Activated naive CD4-positive, alpha-beta T cell treated with anti-CD3 and anti-CD28 coated beads for 36 hours (primary cell): ENCODE measurements at regions of chr6 and their contacts with region 1.

Region 1: DNA sequence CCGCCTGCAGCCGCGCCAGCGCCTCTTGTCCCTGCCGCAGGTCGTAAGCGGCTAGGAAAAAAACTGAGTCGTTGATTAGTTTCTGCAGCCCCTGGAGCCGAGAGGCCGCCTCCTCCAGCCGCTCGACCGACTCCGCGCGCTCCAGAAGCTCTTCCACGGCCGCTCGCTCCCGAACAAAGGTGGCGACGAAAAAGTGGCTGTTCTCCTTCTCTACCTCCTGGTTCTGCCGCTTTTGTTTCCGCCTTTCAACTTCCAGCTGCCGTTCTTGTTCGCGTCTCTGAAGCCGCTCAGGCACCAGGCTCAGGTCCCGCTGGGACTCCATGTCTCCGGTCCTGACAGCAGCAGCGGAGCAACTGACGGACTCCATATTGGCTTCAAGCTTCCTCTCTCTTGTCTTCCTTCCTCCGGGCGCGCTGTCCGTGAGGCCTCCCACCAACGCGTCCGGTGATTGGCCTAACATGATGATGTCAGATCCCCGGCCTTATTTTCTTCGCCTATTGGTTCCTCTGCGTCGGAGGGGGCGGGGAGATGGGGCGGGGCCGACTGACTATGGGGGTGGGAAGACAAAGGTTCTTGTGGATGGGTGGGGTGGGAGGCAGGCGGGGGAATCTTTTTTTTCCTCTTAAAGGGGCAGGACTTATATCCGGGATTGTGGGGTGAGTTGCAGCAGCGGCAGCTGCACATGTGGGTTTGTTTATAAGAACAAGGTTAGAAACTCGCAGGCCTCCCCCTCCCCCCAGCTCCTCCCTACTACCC is at the start of gene TBCC:
- DNase-seq: peak; percentile 98
- H3K4me3 Mint-ChIP-seq: peak within 1 kb of the TSS; percentile 100
- H3K27ac Mint-ChIP-seq: peak within 1 kb of the TSS; percentile 99
- H3K4me1 Mint-ChIP-seq: peaks cover 25% of the 10 kb centered on the region
- H3K27me3 Mint-ChIP-seq: no peaks in the 10 kb centered on the region
- total RNA-seq, gene TBCC: 12.6 to 12.9 TPM

Region 2: DNA sequence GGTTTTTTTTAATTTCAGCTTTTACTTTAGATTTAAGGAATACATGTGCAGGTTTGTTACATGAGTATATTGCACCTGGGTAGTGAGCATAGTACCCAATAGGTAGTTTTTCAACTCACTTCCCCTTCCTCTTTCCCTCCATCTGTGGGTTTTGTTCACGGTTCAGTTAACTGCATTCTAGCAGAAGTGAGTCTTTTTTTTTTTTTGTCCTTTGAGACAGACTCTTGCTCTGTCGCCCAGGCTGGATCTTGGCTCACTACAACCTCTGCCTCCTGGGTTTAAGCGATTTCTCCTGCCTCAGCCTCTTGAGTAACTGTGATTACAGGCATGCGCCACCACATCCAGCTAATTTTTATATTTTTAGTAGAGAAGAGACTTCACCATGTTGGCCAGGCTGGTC is 173.4 kb before region 1 on chr6:
- CTCF ChIA-PET with region 1: no interaction called
- intact Hi-C with region 1: loop called (anchors 1 kb)
- DNase-seq: no peak
- H3K4me3 Mint-ChIP-seq: no peak overlapping the region
- H3K27ac Mint-ChIP-seq: no peak overlapping the region
- H3K4me1 Mint-ChIP-seq: peaks cover 49% of the 10 kb centered on the region
- H3K27me3 Mint-ChIP-seq: no peaks in the 10 kb centered on the region

Region 3: DNA sequence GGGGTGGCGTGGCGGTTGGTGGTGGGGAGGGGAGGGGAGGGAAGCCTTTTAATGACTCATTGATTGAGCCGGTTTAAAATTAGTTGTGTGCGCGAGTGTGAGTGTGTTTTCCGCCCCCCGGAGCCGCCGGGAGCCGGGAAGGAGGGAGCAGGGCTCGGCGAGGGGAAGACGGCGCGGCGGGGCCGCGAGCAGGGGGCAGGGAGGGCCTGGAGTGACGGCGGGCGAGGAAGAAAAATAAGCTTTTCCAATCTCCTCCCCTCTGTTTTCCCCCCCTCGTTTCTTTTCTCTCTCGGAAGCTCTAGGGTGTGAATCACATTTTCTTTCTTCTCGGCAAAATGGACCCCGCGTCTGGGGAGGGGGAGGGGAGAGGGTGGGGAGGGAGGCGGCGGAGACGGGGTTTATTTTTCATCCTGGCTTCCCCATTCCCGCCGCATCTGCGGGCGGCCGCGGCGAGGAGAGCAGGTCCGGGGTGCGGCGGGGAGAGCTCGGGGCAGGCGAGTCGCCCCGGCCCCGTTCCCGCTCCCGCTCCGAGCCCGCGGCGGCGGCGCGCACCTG is 36.8 kb after region 1 on chr6:
- CTCF ChIA-PET with region 1: no interaction called
- intact Hi-C with region 1: loop called (anchors 1 kb)
- DNase-seq: peak; percentile 75
- H3K4me3 Mint-ChIP-seq: peak overlapping the region; percentile 81
- H3K27ac Mint-ChIP-seq: peak overlapping the region; percentile 100
- H3K4me1 Mint-ChIP-seq: peaks cover 26% of the 10 kb centered on the region
- H3K27me3 Mint-ChIP-seq: no peaks in the 10 kb centered on the region

Region 4: GRCh38 chr6:42890311-42891198 is 144.7 kb after region 1 on chr6:
- CTCF ChIA-PET with region 1: interaction called, 3 read pairs
- intact Hi-C with region 1: loop called (anchors 1 kb)
- DNase-seq: peak; percentile 96
- H3K4me3 Mint-ChIP-seq: peak overlapping the region; percentile 82
- H3K27ac Mint-ChIP-seq: peak overlapping the region; percentile 95
- H3K4me1 Mint-ChIP-seq: peaks cover 32% of the 10 kb centered on the region
- H3K27me3 Mint-ChIP-seq: no peaks in the 10 kb centered on the region

Region 5: GRCh38 chr6:42984001-42984923 is 238.4 kb after region 1 on chr6 and contains the start of gene PPP2R5D:
- CTCF ChIA-PET with region 1: no interaction called
- intact Hi-C with region 1: loop called (anchors 1 kb)
- DNase-seq: peak; percentile 99
- H3K4me3 Mint-ChIP-seq: peak within 1 kb of the TSS; percentile 93
- H3K27ac Mint-ChIP-seq: peak within 1 kb of the TSS; percentile 81
- H3K4me1 Mint-ChIP-seq: peaks cover 51% of the 10 kb centered on the region
- H3K27me3 Mint-ChIP-seq: no peaks in the 10 kb centered on the region
- total RNA-seq, gene PPP2R5D: 52.4 to 54.4 TPM

Region 6: GRCh38 chr6:43211955-43212354 is 466.1 kb after region 1 on chr6:
- CTCF ChIA-PET with region 1: no interaction called
- intact Hi-C with region 1: no loop called
- DNase-seq: no peak
- H3K4me3 Mint-ChIP-seq: no peak overlapping the region
- H3K27ac Mint-ChIP-seq: no peak overlapping the region
- H3K4me1 Mint-ChIP-seq: no peaks in the 10 kb centered on the region
- H3K27me3 Mint-ChIP-seq: no peaks in the 10 kb centered on the region

Region 7: DNA sequence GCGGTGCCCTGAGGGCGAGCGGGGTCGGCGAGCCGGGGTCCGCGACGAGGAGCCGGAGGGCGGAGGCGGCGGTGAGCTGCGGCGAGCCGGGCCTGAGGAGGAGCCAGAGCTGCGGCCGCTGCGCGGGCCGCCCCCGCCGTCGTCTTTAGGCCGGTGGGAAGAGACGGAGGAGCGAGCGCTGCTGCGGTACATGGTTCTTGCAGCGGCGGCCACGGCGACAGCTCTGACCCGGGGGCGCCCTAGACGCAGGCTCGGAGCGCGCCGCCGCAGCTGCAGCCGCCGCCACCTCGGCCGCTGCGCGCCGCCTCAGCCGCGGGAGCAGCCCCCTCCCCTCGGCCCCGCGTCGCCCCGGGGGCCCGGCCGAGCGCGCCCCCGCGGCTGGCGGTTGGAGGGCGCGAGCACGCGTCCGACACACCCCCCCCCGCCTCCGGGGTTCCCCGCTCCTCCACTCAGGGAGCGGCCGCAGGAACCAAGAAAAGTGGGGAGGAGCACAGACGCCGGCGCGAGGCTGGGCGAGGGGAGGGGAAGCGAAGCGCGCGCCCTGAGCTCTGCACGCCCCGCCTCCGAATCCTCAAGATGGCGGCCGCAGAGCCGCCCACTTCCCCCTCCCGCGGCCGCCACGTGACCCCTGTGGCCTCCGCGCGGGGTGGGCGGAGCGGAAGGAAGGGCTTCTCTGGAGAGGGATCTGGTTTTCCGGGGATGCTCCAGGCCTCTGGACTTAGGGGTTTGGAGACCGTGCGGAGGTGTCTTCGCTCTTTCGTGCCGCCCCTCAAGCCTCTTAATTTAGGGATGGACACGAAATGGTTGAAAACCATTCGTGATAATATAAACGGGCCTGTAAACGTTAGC is 623.5 kb after region 1 on chr6 and contains the start of gene ZNF318:
- CTCF ChIA-PET with region 1: no interaction called
- intact Hi-C with region 1: loop called (anchors 1 kb)
- DNase-seq: peak; percentile 95
- H3K4me3 Mint-ChIP-seq: peak within 1 kb of the TSS; percentile 87
- H3K27ac Mint-ChIP-seq: peak within 1 kb of the TSS; percentile 90
- H3K4me1 Mint-ChIP-seq: peaks cover 36% of the 10 kb centered on the region
- H3K27me3 Mint-ChIP-seq: no peaks in the 10 kb centered on the region
- total RNA-seq, gene ZNF318: 9.3 to 9.9 TPM